ENCODE measurements at regions of chr17 and their contacts with region 1.

Region 1: GRCh38 chr17:29252101-29252866 is 5.6 kb downstream of the CRYBA1 start:
- DNase-seq: no peak
- ATAC-seq: peak in 1 of 4 donors; percentile 16
- H3K4me3 ChIP-seq: no peak overlapping the region
- H3K27ac ChIP-seq: no peak overlapping the region
- H3K4me1 ChIP-seq: peaks cover 18% of the 10 kb centered on the region
- H3K27me3 ChIP-seq: no peaks in the 10 kb centered on the region
- CTCF ChIP-seq: peak; percentile 23

Region 2: DNA sequence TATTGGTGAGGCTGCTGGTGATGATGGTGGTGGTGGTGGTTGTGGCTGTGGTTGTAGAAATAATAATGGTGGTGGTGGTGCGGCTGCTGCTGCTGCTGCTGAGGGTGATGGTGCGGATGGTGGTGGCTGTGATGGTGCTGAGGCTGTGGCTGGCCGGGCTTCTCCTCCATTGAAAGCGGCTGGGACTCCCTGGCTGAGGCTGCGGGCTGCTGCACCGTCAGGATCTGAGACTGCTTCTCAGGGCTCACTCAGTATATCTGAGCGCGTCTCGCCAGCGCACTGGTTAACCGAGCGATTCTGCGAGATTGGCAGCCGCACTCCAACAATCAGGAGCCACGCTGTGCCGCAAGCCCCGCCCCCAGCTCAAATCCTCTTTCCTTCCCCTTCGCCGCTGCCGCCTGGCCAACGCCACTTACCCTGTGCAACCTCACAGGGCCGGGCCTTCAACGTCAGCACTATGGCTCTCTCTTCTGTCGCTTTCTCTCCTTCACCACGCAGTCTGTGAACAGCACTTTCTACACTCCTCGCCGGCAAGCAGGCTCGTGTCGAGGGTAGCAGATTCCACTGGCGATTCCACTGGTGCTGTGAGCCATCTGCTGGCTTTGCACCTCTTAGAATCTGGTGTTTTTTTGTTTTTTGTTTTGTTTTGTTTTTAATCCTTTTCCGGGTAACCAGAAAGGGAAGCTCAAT is 41.8 kb after region 1 on chr17 and contains the start of gene NUFIP2:
- intact Hi-C with region 1: loop called in 1 of 2 experiments (anchors 5 kb)
- DNase-seq: peak; percentile 99 to 100
- ATAC-seq: peak; percentile 92 to 94 (median 94)
- H3K4me3 ChIP-seq: peak within 1 kb of the TSS; percentile 98
- H3K27ac ChIP-seq: peak within 1 kb of the TSS; percentile 99
- H3K4me1 ChIP-seq: peaks cover 28% of the 10 kb centered on the region
- H3K27me3 ChIP-seq: no peaks in the 10 kb centered on the region
- CTCF ChIP-seq: no peak
- total RNA-seq, gene NUFIP2: 31.1 to 50.0 (median 45.4) TPM

Region 3: GRCh38 chr17:30981531-30982519 is 1729.5 kb after region 1 on chr17:
- intact Hi-C with region 1: loop called in 1 of 2 experiments (anchors 5 kb)
- DNase-seq: no peak
- ATAC-seq: no peak
- H3K4me3 ChIP-seq: no peak overlapping the region
- H3K27ac ChIP-seq: no peak overlapping the region
- H3K4me1 ChIP-seq: no peaks in the 10 kb centered on the region
- H3K27me3 ChIP-seq: no peaks in the 10 kb centered on the region
- CTCF ChIP-seq: no peak

Measured in psoas muscle (tissue), 8 donors.